Posterior vena cava (tissue), 2 donors: ENCODE measurements at regions of chr6 and their contacts with region 1.

Region 1: GRCh38 chr6:131387562-131388447 is 185.2 kb upstream of the ARG1 start:
- DNase-seq: no peak

Region 2: DNA sequence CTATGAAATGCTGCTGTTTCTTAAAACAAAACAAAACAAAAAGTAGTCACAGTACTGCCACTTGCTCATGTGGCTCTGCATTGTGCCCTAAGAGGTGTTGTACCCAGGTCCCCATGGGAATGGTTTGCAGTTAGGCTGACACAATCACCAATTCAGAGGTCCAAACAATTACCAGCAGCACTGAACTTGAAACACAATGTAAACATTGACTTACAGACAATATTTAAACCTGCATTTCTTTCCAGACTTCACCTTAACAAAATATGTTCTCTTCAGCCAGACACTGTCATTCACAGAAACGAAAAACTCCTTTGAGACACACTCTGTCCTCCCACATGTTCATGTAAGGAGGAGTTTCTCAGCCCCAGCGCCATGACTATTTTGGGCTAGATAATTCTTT is 21.6 kb before region 1 on chr6:
- intact Hi-C with region 1: loop called in 1 of 2 experiments (anchors 1 kb)
- DNase-seq: no peak